ENCODE measurements at regions of chr6 and their contacts with region 1.

Region 1: GRCh38 chr6:84663866-84664265 is 100.5 kb downstream of the TBX18 start:
- DNase-seq: no peak
- ATAC-seq: no peak
- H3K4me3 ChIP-seq: no peak overlapping the region
- H3K27ac ChIP-seq: no peak overlapping the region
- H3K4me1 ChIP-seq: no peaks in the 10 kb centered on the region
- H3K27me3 ChIP-seq: no peaks in the 10 kb centered on the region
- CTCF ChIP-seq: no peak

Region 2: DNA sequence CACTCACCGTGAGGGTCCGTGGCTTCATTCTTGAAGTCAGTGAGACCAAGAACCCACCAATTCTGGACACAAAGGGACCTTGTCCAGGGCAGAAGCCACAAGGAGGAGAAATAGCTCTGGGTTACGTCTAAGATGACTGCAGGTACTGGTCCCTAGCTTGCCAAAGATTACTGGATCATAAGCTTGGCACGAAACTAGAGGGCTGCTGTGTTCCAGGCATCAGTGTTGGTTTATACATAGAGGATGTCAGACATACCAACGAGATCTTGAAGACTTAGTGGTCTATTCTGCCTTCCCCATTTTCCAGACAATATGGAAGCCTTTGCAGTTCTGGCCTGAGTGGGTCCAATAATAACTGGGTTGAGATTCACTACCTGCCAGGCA is 75.2 kb before region 1 on chr6:
- intact Hi-C with region 1: loop called in 1 of 10 experiments (anchors 2 kb)
- DNase-seq: no peak
- ATAC-seq: no peak
- H3K4me3 ChIP-seq: no peak overlapping the region
- H3K27ac ChIP-seq: no peak overlapping the region
- H3K4me1 ChIP-seq: no peaks in the 10 kb centered on the region
- H3K27me3 ChIP-seq: no peaks in the 10 kb centered on the region
- CTCF ChIP-seq: no peak

Region 3: DNA sequence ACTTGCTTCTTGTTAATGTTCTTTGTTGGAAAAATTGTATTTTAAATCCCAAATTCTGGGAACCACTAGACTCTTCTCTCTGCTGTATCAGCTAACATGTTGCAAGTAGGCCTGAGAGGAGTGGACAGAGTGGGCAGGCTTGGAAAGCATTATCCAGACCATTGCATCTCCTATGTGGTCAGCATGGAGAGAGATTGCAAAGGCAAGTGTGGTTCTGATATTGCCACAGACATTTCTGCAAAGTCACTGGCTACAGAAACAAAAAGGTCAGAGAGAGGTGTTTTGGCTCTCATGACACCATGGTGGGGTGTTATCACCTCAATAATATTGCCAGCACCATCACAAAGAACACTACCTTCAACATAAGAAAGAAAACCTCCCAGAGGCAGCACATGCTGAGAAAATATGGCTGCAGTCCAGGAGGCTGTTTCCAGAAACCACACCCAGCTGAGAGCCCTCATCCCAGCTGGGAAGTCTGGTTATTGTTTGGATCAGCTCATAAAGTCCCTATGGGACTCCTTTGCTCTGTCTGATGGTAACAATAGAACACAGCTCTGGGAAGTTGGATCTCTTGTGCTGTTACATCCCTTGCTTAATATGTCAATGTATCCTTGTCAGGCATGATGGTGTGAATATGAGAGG is 178.8 kb after region 1 on chr6:
- intact Hi-C with region 1: no loop called
- DNase-seq: no peak
- ATAC-seq: no peak
- H3K4me3 ChIP-seq: no peak overlapping the region
- H3K27ac ChIP-seq: no peak overlapping the region
- H3K4me1 ChIP-seq: no peaks in the 10 kb centered on the region
- H3K27me3 ChIP-seq: no peaks in the 10 kb centered on the region
- CTCF ChIP-seq: no peak